A549 (cell line): ENCODE measurements at regions of chr17 and their contacts with region 1.

Region 1: DNA sequence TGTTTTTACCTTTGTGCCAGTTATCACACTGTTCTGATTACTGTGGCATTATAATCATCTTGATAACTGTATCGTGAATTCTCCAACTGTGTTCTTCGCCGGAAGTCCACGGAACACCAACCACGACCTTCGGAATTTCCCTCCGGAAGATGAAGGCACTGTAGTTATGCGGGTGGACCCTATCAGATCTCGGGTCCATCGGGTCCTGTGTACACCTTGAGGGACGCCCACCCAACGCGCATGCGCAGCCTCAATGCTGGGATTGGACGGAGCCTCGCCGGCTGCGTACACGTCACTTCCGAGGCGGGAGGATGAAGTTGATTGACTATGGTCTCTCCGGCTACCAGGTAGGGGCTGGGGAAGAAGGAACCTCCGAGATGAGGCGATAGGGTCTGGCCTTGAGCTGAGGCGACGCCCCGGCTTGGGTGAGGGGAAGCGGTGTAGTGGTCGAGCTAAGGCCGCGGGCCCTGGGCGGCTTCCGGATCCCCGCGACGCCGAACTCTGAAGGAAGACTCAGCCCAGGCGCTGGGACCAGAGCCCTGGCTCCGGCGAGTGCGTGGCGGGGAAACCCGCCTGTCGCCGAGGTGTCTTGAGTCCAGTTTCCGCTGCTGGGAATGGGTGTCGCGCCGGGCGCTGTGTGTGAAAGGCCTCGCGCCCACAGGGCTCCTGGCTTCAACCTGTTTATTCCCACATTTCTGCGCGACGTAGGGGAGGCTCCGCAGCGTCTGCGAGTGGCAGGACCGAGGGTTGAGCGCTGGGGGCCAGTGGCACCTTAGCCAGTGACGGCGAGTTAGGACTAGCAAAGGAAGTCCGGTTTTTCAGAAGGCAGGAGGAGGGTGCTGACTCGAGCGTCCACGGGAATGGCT is at the start of gene DHRS7B:
- DNase-seq: peak; percentile 97 to 99
- ATAC-seq: peak; percentile 97 to 98
- H3K4me3 ChIP-seq: peak within 1 kb of the TSS; percentile 83
- H3K27ac ChIP-seq: peak within 1 kb of the TSS; percentile 79 to 90
- H3K4me1 ChIP-seq: peaks cover 13% of the 10 kb centered on the region; the same call in 2 of the 3 replicates
- CTCF ChIP-seq: no peak
- EP300 ChIP-seq: no peak
- POLR2A ChIP-seq: peak; percentile 89
- RAD21 ChIP-seq: no peak
- polyA plus RNA-seq, gene DHRS7B: 25.4 and 31.7 TPM in 2 replicates

Region 2: DNA sequence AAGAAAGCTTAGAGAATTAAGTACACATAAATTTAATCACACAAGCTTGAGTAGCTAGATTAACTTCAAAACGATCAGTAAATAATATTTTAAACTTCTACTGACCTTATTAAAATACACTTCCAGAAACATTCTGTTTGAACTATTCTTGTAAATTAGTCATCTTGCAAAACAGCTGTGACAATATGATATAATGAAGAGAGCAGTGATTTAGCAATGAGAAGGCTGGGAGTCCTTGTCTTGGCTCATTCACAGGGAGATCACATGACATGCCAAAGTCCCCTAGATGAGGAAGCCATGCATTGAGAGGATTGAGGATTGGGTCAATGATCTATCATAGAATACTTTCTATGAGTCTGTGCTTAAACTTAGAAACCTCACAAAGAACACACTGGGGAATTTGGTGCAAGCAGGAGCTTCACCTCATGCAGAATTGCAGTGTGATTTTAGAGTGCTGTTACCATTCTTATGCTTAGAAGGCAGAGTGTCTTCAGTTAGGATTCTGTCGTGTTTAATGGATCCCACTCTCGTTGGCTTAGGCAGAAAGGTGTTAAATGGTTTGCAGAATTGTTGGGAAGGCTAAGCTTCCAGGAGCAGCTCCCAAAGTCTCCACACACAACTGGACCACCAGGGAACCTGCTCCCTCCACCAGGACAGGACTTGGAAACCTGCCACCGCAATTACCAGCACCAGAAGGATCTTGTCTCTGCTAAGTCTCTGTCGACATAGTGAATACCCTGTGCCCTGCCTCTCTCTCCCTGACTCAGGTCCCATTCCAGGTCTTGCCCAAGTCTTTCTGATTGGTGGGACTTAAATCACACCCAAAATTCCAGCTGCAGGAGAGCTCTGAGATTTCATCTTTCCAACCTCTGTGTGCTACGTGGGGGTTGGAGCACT is 171.2 kb before region 1 on chr17:
- CTCF ChIA-PET with region 1: no interaction called
- POLR2A ChIA-PET with region 1: no interaction called
- DNase-seq: no peak
- ATAC-seq: no peak
- H3K4me3 ChIP-seq: no peak overlapping the region
- H3K27ac ChIP-seq: no peak overlapping the region
- H3K4me1 ChIP-seq: peaks cover 7% of the 10 kb centered on the region; the same call in 1 of the 3 replicates
- CTCF ChIP-seq: no peak
- EP300 ChIP-seq: no peak
- POLR2A ChIP-seq: no peak
- RAD21 ChIP-seq: no peak

Region 3: GRCh38 chr17:21140911-21141310 is 14.0 kb after region 1 on chr17:
- CTCF ChIA-PET with region 1: interaction called, 11 read pairs
- POLR2A ChIA-PET with region 1: no interaction called
- DNase-seq: no peak
- ATAC-seq: no peak
- H3K4me3 ChIP-seq: no peak overlapping the region
- H3K27ac ChIP-seq: no peak overlapping the region
- H3K4me1 ChIP-seq: 0 out of 3 replicates have a peak, but pooled peaks cover 7% of the 10 kb centered on the region
- CTCF ChIP-seq: no peak
- EP300 ChIP-seq: no peak
- POLR2A ChIP-seq: no peak
- RAD21 ChIP-seq: no peak

Region 4: DNA sequence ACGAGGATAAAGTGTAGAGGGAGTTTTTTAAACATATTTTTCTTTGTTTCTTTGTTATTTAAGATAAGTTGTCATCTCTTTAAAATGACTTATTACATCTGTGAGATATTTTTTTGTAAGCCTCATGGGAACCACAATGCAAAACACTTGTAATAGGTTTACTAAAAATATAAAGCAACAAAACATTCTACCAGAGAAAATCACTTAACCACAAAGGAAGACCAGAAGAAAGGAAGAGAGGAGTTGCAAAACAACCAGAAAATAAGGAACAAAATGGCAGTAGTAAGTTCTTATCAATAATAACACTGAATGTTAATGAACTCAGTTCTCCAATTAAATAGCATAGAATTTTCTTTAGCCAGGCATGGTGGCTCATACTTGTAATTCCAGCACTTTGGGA is 22.7 kb after region 1 on chr17:
- CTCF ChIA-PET with region 1: interaction called, 12 read pairs
- POLR2A ChIA-PET with region 1: no interaction called
- DNase-seq: no peak
- ATAC-seq: no peak
- H3K4me3 ChIP-seq: no peak overlapping the region
- H3K27ac ChIP-seq: no peak overlapping the region
- H3K4me1 ChIP-seq: no peaks in the 10 kb centered on the region
- CTCF ChIP-seq: no peak
- EP300 ChIP-seq: no peak
- POLR2A ChIP-seq: no peak
- RAD21 ChIP-seq: no peak

Region 5: DNA sequence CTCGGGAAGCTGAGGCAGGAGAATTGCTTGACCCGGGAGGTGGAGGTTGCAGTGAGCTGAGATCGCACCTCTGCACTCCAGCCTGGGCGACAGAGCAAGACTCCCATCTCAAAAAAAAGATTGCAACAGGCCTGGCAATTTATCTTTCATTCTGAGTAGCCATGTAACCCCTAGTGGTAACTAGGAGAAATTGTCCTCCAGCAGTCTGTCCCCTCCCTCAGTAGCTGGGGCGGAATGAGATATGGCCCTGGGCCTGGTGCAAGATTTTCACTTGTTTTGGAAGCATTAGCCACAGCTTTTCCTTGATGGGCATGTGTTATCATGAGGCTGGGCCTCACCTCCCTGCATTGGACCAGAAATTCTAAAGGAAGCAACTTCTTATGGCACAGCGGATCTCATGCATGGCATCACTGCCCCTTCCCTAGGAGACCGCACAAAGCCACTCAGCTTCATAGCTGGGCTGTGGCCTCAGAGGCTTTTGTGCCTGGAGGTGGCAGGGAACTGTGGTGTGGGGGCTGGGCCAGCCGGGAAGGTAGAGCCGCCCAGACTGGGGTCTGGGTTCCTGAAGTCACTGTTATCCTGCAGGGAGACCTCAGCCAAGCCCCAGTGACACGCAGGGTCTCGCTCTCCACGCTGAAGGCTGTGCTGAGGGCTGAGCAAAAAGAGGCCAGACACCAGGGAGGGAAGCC is 112.9 kb after region 1 on chr17:
- CTCF ChIA-PET with region 1: interaction called, 14 read pairs
- POLR2A ChIA-PET with region 1: no interaction called
- DNase-seq: peak; percentile 47 to 84
- ATAC-seq: peak; percentile 57 to 82; a peak in 4 of 6 replicates
- H3K4me3 ChIP-seq: no peak overlapping the region
- H3K27ac ChIP-seq: no peak overlapping the region
- H3K4me1 ChIP-seq: no peaks in the 10 kb centered on the region
- CTCF ChIP-seq: peak; percentile 40
- EP300 ChIP-seq: no peak
- POLR2A ChIP-seq: no peak
- RAD21 ChIP-seq: peak in 1 of 2 experiments; percentile 33; a peak in 1 of 5 replicates

Region 6: GRCh38 chr17:21252796-21253645 is 126.1 kb after region 1 on chr17 and contains the start of gene NATD1:
- CTCF ChIA-PET with region 1: interaction called, 10 read pairs
- POLR2A ChIA-PET with region 1: no interaction called
- DNase-seq: peak; percentile 88 to 93
- ATAC-seq: peak; percentile 63 to 77
- H3K4me3 ChIP-seq: peak within 1 kb of the TSS; percentile 77
- H3K27ac ChIP-seq: peak within 1 kb of the TSS; percentile 52 to 77
- H3K4me1 ChIP-seq: peaks cover 10% of the 10 kb centered on the region
- CTCF ChIP-seq: no peak
- EP300 ChIP-seq: no peak
- POLR2A ChIP-seq: no peak
- RAD21 ChIP-seq: no peak
- polyA plus RNA-seq, gene NATD1: 1.1 and 1.5 TPM in 2 replicates